Head of caudate nucleus (tissue), 42 donors: ENCODE measurements at regions of chr5 and their contacts with region 1.

Region 1: GRCh38 chr5:179623003-179623880 is at the start of gene HNRNPH1:
- DNase-seq: peak in 40 of 42 donors; percentile 92 to 99 (median 97)

Region 2: GRCh38 chr5:179530069-179530998 is 92.9 kb before region 1 on chr5:
- intact Hi-C with region 1: no loop called
- DNase-seq: peak in 38 of 42 donors; percentile 11 to 77 (median 52)

Region 3: DNA sequence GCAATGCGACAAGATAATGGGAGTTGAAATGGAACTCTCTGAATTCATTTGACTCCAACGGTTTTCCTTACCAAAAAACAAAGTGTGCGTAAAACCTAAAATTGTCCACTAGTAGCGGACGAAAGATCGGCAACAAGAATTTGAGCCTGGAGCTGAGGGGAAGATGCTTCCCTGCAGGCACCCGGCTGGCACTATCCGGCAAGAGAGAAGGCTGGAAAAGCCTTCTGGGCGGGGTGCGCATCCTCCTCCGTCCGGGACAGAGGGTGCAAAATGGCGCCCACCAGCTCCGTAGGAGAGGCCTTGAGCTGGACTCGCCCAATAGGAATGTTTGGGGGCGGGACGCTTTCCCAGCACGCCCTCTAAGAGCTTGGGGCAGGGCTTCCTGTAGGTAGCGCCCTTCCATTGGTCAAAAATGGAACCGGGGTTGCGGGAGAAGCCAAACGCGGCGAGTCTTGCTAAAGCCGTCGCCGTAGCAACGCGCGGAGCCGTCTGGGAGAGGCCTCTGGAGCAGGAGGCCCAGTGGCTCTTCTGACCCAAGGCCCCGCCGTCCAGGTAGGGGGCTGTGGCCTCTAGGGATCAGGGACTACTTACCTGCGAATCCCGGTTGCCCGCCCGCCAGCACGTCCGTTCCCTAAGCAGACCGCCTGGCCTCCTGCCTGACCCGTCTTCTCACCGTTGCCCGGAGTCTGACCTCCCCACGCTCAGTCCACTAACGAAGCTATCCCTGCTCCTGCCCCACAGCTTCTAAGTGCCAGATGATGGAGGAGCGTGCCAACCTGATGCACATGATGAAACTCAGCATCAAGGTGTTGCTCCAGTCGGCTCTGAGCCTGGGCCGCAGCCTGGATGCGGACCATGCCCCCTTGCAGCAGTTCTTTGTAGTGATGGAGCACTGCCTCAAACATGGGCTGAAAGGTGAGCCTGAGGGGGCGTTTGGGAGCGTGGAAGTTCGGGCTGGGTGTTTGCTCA is 63.7 kb before region 1 on chr5:
- intact Hi-C with region 1: loop called (anchors 10 kb)
- DNase-seq: peak; percentile 93 to 100 (median 98)